Panc1 (cell line): ENCODE measurements at regions of chr6 and their contacts with region 1.

Region 1: DNA sequence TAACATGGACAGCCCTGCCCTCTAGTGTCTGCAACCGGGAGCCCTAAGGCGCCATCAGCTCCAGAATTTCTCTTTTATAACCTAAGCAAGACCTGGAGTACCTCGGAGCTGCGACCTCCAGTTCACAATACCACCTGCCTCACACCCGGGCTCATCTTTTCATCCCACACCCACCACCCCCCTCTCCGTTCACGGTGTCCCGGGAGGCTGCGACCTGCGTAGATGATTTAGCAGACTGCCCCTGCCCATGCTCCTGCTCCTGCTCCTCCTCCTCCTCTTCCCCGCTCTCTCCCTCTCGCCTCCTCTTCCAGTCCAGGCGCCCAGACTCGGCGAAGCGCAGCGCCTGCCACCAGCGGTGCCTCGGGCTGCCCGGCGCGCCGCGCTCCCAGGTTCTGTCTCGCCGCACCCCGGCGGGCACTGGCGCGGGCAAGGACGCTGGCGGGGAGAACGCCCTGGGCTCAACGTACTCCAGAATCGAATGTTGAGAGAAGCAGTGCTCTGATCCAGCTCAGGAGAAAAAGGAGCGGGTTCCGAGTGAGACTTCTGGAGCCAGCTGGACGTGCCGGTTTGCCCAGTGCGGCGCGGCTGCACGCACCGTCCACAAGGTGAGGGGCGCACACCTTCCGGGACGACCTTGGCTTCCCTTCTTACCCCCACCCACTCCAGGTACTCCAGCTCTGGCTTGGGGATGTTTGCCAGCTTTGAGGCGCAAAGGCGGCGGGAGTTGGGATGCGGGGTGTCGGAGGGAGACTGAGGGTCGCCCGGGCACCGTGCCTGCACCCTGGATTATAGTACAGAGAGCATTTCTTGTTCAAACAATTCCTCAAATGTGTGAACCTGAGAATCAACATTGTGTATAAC is at the start of gene HTR1E:
- DNase-seq: no peak
- ATAC-seq: peak; percentile 97
- H3K4me3 ChIP-seq: peak within 1 kb of the TSS; percentile 34 to 47
- H3K27ac ChIP-seq: no peak within 1 kb of the TSS
- H3K4me1 ChIP-seq: no peaks in the 10 kb centered on the region; the same call in 1 of the 2 replicates
- H3K27me3 ChIP-seq: peaks cover 28% of the 10 kb centered on the region
- CTCF ChIP-seq: peak; percentile 85
- total RNA-seq, gene HTR1E: not detected

Region 2: DNA sequence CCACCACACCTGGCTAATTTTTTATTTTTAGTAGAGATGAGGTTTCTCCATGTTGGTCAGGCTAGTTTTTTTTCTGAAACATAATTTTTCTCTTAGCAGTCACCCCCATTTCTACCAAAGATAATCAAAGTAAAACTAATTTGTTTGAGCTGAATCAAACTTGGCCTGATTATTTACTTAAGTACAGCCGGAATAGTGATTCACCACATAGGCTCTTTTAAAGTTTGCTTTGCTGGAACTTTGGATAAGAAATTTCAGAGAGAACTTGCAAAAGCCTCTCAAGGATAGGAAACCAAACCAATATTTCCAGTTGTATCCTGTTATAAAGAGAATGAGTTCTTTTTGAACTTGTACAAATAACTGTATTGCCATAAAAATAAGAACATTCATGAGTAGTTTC is 1189.8 kb before region 1 on chr6:
- CTCF ChIA-PET with region 1: no interaction called
- POLR2A ChIA-PET with region 1: no interaction called
- in situ Hi-C with region 1: no loop called
- intact Hi-C with region 1: loop called (anchors 10 kb)
- DNase-seq: no peak
- ATAC-seq: no peak; the same call in 1 of the 2 replicates
- H3K4me3 ChIP-seq: no peak overlapping the region
- H3K27ac ChIP-seq: no peak overlapping the region
- H3K4me1 ChIP-seq: no peaks in the 10 kb centered on the region
- H3K27me3 ChIP-seq: no peaks in the 10 kb centered on the region
- CTCF ChIP-seq: no peak

Region 3: DNA sequence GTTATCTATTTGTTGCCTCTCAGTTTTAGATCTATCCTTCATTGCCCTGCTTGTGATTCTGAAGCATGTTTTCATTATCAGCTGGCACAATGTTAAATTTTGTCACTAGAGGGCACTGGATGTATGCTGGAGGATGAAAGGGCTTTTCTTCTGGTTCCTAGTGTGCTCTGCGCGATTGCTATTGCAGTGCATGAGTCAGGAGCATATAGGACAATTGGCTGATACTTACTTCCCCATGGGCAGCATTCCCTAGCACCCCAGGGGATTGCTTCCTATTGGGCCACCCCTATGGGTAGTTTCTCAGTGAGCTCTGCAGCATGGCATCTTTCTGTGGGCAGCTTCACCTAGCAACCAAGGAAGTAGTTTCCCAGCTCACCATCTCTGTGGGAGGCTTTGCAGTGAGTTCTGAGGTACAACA is 1014.4 kb before region 1 on chr6:
- CTCF ChIA-PET with region 1: interaction called, 3 read pairs
- POLR2A ChIA-PET with region 1: no interaction called
- in situ Hi-C with region 1: no loop called
- intact Hi-C with region 1: loop called (anchors 5 kb)
- DNase-seq: peak; percentile 45
- ATAC-seq: peak; percentile 95
- H3K4me3 ChIP-seq: no peak overlapping the region
- H3K27ac ChIP-seq: no peak overlapping the region
- H3K4me1 ChIP-seq: no peaks in the 10 kb centered on the region
- H3K27me3 ChIP-seq: no peaks in the 10 kb centered on the region
- CTCF ChIP-seq: peak; percentile 86

Region 4: GRCh38 chr6:86913795-86914194 is 23.7 kb before region 1 on chr6:
- CTCF ChIA-PET with region 1: no interaction called
- POLR2A ChIA-PET with region 1: no interaction called
- in situ Hi-C with region 1: no loop called
- intact Hi-C with region 1: no loop called
- DNase-seq: no peak
- ATAC-seq: no peak
- H3K4me3 ChIP-seq: no peak overlapping the region
- H3K27ac ChIP-seq: no peak overlapping the region
- H3K4me1 ChIP-seq: no peaks in the 10 kb centered on the region
- H3K27me3 ChIP-seq: no peaks in the 10 kb centered on the region
- CTCF ChIP-seq: no peak